Heart right ventricle (tissue), 16 donors: ENCODE measurements at regions of chr4 and their contacts with region 1.

Region 1: GRCh38 chr4:183185018-183185417 is 86.0 kb downstream of the WWC2 start:
- DNase-seq: no peak
- ATAC-seq: no peak
- H3K4me3 ChIP-seq: no peak overlapping the region
- H3K27ac ChIP-seq: no peak overlapping the region
- H3K4me1 ChIP-seq: peaks cover 0 to 21% (median 6%) of the 10 kb centered on the region in 9 donors
- H3K27me3 ChIP-seq: no peaks in the 10 kb centered on the region
- CTCF ChIP-seq: no peak

Region 2: GRCh38 chr4:182897601-182898478 is 287.2 kb before region 1 on chr4:
- intact Hi-C with region 1: no loop called
- DNase-seq: no peak
- ATAC-seq: no peak
- H3K4me3 ChIP-seq: no peak overlapping the region
- H3K27ac ChIP-seq: no peak overlapping the region
- H3K4me1 ChIP-seq: no peaks in the 10 kb centered on the region
- H3K27me3 ChIP-seq: no peaks in the 10 kb centered on the region
- CTCF ChIP-seq: no peak

Region 3: GRCh38 chr4:183241322-183241640 is 56.3 kb after region 1 on chr4:
- intact Hi-C with region 1: loop called in 1 of 10 experiments (anchors 5 kb)
- DNase-seq: no peak
- ATAC-seq: peak in 5 of 8 donors; percentile 11 to 62 (median 49)
- H3K4me3 ChIP-seq: no peak overlapping the region
- H3K27ac ChIP-seq: no peak overlapping the region
- H3K4me1 ChIP-seq: peaks cover 0 to 24% (median 8%) of the 10 kb centered on the region in 9 donors
- H3K27me3 ChIP-seq: no peaks in the 10 kb centered on the region
- CTCF ChIP-seq: no peak